OCI-LY7 (cell line): ENCODE measurements at regions of chr10 and their contacts with region 1.

Region 1: DNA sequence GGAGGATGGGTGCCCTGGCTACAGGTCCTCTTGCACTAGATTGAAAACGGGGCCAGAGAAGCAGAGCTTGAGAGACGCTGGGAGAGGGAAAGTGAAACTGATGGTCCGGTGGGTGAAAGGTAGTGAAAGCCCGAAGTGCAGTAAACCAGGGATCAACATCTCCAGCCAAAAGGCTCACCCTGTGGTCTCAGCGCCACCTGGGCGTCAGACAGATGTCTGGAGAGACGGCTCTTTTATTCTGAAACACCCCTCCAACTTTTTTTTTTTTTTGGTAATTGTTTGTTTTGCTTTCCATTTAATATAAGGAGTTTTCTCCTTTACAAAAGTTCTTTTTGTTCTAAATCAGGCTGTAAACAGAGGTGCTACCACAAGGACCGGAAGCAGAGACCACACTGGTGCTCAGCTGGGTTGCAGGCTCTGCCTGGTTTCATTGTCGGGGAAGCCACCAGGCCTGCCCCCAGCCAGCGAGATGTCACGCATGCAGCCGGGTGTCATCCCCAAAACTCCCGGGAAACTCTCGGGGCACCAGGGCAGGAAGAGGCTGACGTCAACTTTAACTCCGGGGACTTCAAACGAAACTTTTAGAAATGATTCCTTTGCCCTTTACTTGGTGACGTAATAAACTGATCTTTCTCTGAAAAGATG is 11.2 kb downstream of the IL2RA start:
- DNase-seq: peak; percentile 90
- H3K4me3 ChIP-seq: peak overlapping the region; percentile 63
- H3K27ac ChIP-seq: peak overlapping the region; percentile 94
- H3K4me1 ChIP-seq: peaks cover 92% of the 10 kb centered on the region
- CTCF ChIP-seq: peak; percentile 78

Region 2: GRCh38 chr10:6014241-6014761 is 36.6 kb before region 1 on chr10:
- CTCF ChIA-PET with region 1: interaction called, 10 read pairs
- POLR2A ChIA-PET with region 1: interaction called, 6 read pairs
- intact Hi-C with region 1: loop called (anchors 1 kb)
- DNase-seq: peak; percentile 86
- H3K4me3 ChIP-seq: peak overlapping the region; percentile 4
- H3K27ac ChIP-seq: peak overlapping the region; percentile 68
- H3K4me1 ChIP-seq: peaks cover 19% of the 10 kb centered on the region
- CTCF ChIP-seq: peak; percentile 99

Region 3: DNA sequence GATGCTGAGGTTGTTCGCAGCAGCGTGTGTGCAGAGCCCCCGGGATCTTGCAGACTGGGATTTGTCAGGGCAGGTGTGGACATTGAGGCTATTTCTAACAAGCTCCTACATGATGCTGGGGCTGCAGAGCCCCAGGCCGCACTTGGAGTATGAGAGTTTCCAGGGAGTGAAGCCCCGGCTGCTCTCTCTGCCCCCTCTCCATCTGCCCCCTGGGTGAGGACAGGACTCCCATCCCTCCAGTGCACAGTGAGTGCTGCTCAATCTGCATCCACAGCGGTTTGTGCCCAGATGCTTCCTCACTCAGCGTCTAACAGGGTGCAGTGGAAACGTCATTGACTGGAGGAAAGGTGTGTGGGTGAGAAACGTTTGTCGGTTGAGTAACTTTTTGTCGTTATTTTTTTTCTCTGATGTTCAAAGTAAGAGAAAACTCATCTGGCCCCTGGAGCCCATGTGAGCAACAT is 14.0 kb before region 1 on chr10:
- CTCF ChIA-PET with region 1: interaction called, 10 read pairs
- POLR2A ChIA-PET with region 1: interaction called, 43 read pairs
- intact Hi-C with region 1: no loop called
- DNase-seq: peak; percentile 70
- H3K4me3 ChIP-seq: peak overlapping the region; percentile 40
- H3K27ac ChIP-seq: peak overlapping the region; percentile 73
- H3K4me1 ChIP-seq: peaks cover 76% of the 10 kb centered on the region
- CTCF ChIP-seq: no peak

Region 4: DNA sequence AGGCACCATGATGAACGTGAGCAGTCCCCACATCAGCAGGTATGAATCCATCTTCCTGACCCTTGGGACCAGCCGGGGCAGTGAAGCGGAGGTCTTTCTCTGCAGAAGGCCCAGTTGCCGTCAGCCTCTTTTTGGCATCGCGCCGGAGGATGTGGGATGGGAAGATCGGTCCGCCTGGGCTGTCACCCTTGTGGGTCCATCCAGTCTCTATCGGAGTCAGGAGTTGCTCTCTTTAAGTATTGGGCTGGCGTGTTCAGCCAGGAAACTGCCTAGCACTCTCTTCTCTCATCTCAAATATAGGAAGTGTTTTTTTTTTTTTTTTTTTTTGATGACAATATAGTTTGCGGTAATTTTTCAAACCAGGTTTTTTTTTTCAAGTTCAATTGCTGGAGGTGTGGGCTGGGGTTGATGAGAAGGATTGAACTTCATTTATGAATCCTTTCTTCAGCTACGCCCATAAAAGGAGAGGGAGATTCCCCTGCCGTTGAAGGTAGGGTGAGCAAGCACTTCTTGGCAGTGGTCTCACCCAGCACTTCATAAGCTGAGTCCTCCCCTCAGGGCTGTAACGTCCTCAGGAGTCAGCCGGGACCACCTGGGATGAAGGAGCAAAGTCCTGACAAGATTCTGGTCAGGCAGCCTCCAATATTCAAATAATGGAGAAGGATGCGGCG is 11.3 kb after region 1 on chr10 and contains the start of gene IL2RA:
- CTCF ChIA-PET with region 1: interaction called, 5 read pairs
- POLR2A ChIA-PET with region 1: interaction called, 110 read pairs
- intact Hi-C with region 1: no loop called
- DNase-seq: peak; percentile 56
- H3K4me3 ChIP-seq: peak within 1 kb of the TSS; percentile 78
- H3K27ac ChIP-seq: peak within 1 kb of the TSS; percentile 62
- H3K4me1 ChIP-seq: peaks cover 71% of the 10 kb centered on the region
- CTCF ChIP-seq: no peak
- total RNA-seq, gene IL2RA: 24.0 and 24.3 TPM in 2 replicates

Region 5: DNA sequence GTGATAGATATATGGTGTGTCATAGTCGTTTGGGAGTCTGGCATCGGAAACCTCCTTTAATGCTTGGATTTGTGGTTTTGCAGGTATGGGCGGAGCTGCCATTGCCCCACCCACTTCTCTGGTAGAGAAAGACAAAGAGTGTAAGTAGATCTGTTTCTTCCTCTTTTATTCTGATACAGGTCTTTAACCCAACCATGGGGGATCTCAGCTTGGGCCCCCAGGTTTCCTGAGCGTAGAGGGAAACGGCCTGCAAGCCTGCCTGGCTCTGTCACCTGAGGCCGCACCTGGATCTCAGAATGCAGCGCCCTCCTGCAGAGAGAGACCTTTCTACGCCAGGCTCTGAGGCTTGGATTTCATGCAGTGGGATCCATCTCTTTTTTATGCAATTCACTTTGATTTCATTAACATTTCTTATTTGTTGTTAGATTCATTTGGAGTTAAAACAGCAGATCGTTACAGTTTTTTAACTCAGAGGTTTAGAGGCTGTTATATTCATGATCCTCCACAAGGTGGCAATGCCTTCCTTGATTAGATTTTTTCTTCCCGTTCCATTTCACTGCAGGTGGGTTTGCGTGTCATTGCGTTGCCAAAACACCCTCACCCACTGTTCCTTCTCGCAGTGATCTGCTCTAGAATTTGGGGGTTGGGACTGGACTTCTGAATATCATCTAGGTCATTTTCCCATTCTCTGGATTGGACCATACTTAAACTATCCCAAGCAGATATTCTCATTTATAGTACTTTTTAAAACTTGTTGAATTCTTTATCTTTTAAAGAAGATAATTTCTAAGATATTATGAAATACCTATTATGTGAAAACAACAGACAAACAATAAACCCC is 57.9 kb after region 1 on chr10:
- CTCF ChIA-PET with region 1: no interaction called
- POLR2A ChIA-PET with region 1: no interaction called
- intact Hi-C with region 1: no loop called
- DNase-seq: peak; percentile 68
- H3K4me3 ChIP-seq: no peak overlapping the region
- H3K27ac ChIP-seq: no peak overlapping the region
- H3K4me1 ChIP-seq: no peaks in the 10 kb centered on the region
- CTCF ChIP-seq: peak; percentile 91